ENCODE measurements at regions of chr2 and their contacts with region 1.

Region 1: GRCh38 chr2:3780477-3781402 is 77.4 kb downstream of the DCDC2C start:
- DNase-seq: peak; percentile 85
- ATAC-seq: peak; percentile 100
- H3K4me3 Mint-ChIP-seq: peak overlapping the region; percentile 33
- H3K27ac Mint-ChIP-seq: peak overlapping the region; percentile 83
- H3K4me1 Mint-ChIP-seq: peaks cover 8% of the 10 kb centered on the region
- H3K27me3 Mint-ChIP-seq: no peaks in the 10 kb centered on the region

Region 2: GRCh38 chr2:3728104-3729054 is 52.4 kb before region 1 on chr2:
- CTCF ChIA-PET with region 1: interaction called, 81 read pairs
- POLR2A ChIA-PET with region 1: no interaction called
- DNase-seq: no peak
- ATAC-seq: no peak
- H3K4me3 Mint-ChIP-seq: no peak overlapping the region
- H3K27ac Mint-ChIP-seq: no peak overlapping the region
- H3K4me1 Mint-ChIP-seq: no peaks in the 10 kb centered on the region
- H3K27me3 Mint-ChIP-seq: no peaks in the 10 kb centered on the region

Measured in activated CD8-positive, alpha-beta T cell treated with anti-CD3 and anti-CD28 coated beads, Interleukin-2, amount 10 ng/mL, durations not matched to agents 7 days and 5 days (primary cell).